PC-3 (cell line): ENCODE measurements at regions of chr12 and their contacts with region 1.

Region 1: DNA sequence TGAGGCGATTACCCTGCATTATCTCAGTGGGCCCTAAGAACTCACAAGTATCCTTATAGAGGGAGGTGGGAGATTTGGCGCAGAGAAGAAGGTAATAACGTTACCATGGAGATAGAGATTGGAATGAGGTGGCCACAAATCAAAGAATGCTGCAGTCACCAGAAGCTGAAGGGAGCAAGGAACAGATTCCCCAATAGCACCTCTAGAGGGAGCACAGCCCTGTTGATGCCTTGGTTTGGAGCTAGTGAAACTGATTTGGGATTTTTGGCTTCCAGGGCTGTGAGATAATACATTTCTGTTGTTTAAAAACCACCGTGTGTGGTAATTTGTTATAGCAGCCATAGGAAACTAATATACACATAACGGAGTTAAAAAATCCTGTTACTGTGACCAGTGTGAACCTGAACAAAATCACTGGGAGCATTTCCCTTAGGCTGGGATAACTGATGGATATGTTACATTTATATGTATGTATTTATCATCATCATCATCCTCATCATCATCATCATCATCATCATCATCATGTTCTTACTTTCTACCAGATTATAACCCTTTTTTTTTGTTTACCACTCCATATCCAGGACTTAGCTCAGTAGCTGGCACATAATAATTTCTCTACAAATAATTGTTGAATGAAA is 100.3 kb downstream of the LIN7A start:
- DNase-seq: peak; percentile 51
- ATAC-seq: peak; percentile 85
- H3K4me3 ChIP-seq: no peak overlapping the region
- H3K27ac ChIP-seq: no peak overlapping the region
- H3K4me1 ChIP-seq: no peaks in the 10 kb centered on the region
- H3K27me3 ChIP-seq: peaks cover 16% of the 10 kb centered on the region
- CTCF ChIP-seq: peak; percentile 77

Region 2: GRCh38 chr12:80946594-80946993 is 109.1 kb after region 1 on chr12:
- CTCF ChIA-PET with region 1: no interaction called
- POLR2A ChIA-PET with region 1: no interaction called
- intact Hi-C with region 1: loop called (anchors 5 kb)
- DNase-seq: peak; percentile 16
- ATAC-seq: peak; percentile 64
- H3K4me3 ChIP-seq: no peak overlapping the region
- H3K27ac ChIP-seq: no peak overlapping the region
- H3K4me1 ChIP-seq: no peaks in the 10 kb centered on the region
- H3K27me3 ChIP-seq: no peaks in the 10 kb centered on the region
- CTCF ChIP-seq: peak; percentile 41

Region 3: GRCh38 chr12:81128930-81129554 is 291.6 kb after region 1 on chr12:
- CTCF ChIA-PET with region 1: no interaction called
- POLR2A ChIA-PET with region 1: no interaction called
- intact Hi-C with region 1: loop called (anchors 1 kb)
- DNase-seq: peak; percentile 60
- ATAC-seq: peak; percentile 73
- H3K4me3 ChIP-seq: no peak overlapping the region
- H3K27ac ChIP-seq: no peak overlapping the region
- H3K4me1 ChIP-seq: no peaks in the 10 kb centered on the region
- H3K27me3 ChIP-seq: no peaks in the 10 kb centered on the region
- CTCF ChIP-seq: peak; percentile 83

Region 4: GRCh38 chr12:81257947-81258551 is 420.6 kb after region 1 on chr12:
- CTCF ChIA-PET with region 1: interaction called, 12 read pairs
- POLR2A ChIA-PET with region 1: no interaction called
- intact Hi-C with region 1: loop called (anchors 1 kb)
- DNase-seq: peak; percentile 66
- ATAC-seq: no peak; the same call in 1 of the 2 replicates
- H3K4me3 ChIP-seq: no peak overlapping the region
- H3K27ac ChIP-seq: no peak overlapping the region
- H3K4me1 ChIP-seq: no peaks in the 10 kb centered on the region
- H3K27me3 ChIP-seq: peaks cover 4% of the 10 kb centered on the region
- CTCF ChIP-seq: peak; percentile 76